PC-9 (cell line): ENCODE measurements at regions of chr6 and their contacts with region 1.

Region 1: DNA sequence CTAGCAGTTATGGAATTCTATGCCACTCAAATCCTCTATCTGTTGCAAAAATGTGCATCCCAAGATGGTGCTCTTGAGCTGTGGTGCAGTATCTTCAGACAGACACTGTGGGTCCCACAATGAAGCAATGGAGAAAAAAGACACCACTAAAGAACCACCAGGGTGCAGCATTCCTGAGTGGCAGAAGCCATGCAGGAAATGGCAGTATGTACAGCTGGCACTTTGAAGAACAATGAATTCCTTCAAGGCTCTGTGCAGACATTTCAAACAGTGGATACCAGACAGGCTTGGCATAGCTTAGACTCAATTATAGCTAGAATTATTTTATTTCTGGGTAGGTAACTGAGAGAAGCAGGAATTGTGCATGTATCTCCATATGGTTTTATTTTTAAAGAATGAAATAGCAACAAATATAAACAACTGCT is 24.0 kb upstream of the HDAC2 start:
- DNase-seq: peak; percentile 65 to 66
- H3K4me3 ChIP-seq: no peak overlapping the region
- H3K27ac ChIP-seq: no peak overlapping the region
- H3K4me1 ChIP-seq: 0 out of 2 replicates have a peak, but pooled peaks cover 16% of the 10 kb centered on the region
- H3K27me3 ChIP-seq: no peaks in the 10 kb centered on the region
- CTCF ChIP-seq: peak; percentile 75

Region 2: DNA sequence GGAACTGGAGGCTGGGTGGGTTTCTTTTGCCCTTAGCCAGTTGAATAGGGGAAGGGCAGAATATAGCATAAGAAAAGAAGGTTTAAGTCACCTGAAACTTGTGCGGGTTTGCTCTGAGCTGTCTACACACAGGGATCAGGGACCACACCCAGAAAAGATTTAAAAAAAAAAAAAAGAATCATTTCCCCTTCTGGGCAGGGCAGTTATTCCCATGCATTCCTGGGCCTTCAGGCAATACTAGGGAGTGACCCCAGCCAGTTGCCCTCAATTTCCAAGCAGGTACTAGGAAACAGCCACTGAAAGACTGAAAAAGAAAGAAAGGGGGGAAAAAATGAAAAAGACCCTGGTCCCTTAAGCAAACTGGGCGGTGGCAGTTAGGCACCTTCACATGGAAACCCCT is 15.6 kb after region 1 on chr6:
- CTCF ChIA-PET with region 1: no interaction called
- POLR2A ChIA-PET with region 1: no interaction called
- intact Hi-C with region 1: loop called (anchors 2 kb)
- DNase-seq: peak in 1 of 2 experiments; percentile 23
- H3K4me3 ChIP-seq: no peak overlapping the region
- H3K27ac ChIP-seq: no peak overlapping the region
- H3K4me1 ChIP-seq: no peaks in the 10 kb centered on the region
- H3K27me3 ChIP-seq: no peaks in the 10 kb centered on the region
- CTCF ChIP-seq: no peak

Region 3: DNA sequence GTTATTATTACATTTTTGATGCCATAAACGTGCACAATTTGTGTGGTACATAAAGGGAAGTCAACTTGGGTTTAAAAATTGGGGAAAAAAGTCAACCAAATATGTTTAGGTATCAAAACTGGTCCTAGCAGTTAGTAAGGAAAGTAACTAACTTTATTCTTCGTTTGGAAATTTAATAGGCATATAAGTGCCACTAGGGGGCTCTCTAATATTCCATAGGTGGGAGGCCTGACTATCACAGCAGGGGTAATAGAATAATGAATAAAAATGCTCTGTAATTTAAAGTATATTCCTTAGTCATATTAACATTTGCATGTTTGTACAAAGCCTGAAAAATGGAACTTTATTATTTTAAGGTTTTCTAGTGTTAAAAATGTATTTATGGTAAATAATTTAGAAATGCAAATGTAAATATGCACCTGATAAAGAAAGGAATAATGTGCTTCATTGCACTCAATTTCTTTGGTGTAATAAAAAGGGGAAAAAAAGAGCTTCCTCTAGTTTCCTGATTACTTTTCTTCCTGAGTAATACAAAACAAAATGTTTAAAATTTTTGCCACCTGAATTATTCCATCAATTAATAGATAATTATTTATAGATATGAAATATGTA is 101.7 kb after region 1 on chr6:
- CTCF ChIA-PET with region 1: interaction called, 3 read pairs
- POLR2A ChIA-PET with region 1: no interaction called
- intact Hi-C with region 1: loop called (anchors 1 kb)
- DNase-seq: no peak
- H3K4me3 ChIP-seq: no peak overlapping the region
- H3K27ac ChIP-seq: no peak overlapping the region
- H3K4me1 ChIP-seq: no peaks in the 10 kb centered on the region
- H3K27me3 ChIP-seq: no peaks in the 10 kb centered on the region
- CTCF ChIP-seq: peak; percentile 99

Region 4: DNA sequence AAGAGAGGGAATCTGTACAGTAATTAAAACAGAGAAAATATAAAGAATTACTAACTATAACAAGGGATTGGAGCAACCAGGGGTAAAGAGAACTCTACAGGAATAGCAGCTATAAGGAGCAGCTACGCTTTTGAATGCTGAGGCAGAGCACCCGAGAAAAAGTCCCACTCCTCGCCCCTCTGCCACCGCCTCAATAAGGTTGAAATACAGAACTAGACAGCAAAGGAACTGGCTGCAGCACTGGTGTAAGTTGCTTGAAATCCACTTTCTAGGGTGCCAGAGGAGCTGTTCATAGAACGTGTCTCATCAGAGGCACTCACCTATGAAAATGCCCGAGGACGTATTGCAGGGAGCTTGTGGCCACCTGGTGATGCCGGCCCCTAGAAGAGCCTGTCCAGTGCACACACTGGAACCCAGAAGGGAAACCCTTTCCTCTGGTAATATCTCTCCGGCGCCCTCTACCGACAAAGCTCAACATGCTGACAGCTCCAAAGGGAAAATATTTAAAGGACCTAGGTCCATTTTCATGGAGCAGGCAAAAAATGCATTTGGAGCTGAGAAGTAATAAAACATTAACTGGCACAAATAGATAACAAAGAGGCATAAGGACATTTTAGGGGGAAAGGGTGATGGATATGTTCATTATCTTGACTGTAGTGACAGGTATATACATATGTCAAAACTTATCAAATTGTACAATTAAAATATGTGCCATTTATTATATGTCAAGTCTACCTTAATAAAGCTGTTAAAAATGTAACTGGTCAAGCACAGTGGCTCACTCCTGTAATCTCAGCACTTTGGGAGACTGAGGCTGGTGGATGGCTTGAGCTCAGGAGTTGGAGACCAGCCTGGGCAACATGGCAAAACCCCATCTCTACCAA is 113.4 kb after region 1 on chr6:
- CTCF ChIA-PET with region 1: interaction called, 21 read pairs
- POLR2A ChIA-PET with region 1: interaction called, 3 read pairs
- intact Hi-C with region 1: loop called (anchors 1 kb)
- DNase-seq: peak; percentile 60 to 66
- H3K4me3 ChIP-seq: no peak overlapping the region
- H3K27ac ChIP-seq: no peak overlapping the region
- H3K4me1 ChIP-seq: no peaks in the 10 kb centered on the region
- H3K27me3 ChIP-seq: no peaks in the 10 kb centered on the region
- CTCF ChIP-seq: peak; percentile 87

Region 5: GRCh38 chr6:114304304-114304887 is 309.5 kb after region 1 on chr6:
- CTCF ChIA-PET with region 1: interaction called, 9 read pairs
- POLR2A ChIA-PET with region 1: no interaction called
- intact Hi-C with region 1: loop called (anchors 2 kb)
- DNase-seq: peak in 1 of 2 experiments; percentile 43
- H3K4me3 ChIP-seq: no peak overlapping the region
- H3K27ac ChIP-seq: no peak overlapping the region
- H3K4me1 ChIP-seq: no peaks in the 10 kb centered on the region
- H3K27me3 ChIP-seq: no peaks in the 10 kb centered on the region
- CTCF ChIP-seq: peak; percentile 84

Region 6: DNA sequence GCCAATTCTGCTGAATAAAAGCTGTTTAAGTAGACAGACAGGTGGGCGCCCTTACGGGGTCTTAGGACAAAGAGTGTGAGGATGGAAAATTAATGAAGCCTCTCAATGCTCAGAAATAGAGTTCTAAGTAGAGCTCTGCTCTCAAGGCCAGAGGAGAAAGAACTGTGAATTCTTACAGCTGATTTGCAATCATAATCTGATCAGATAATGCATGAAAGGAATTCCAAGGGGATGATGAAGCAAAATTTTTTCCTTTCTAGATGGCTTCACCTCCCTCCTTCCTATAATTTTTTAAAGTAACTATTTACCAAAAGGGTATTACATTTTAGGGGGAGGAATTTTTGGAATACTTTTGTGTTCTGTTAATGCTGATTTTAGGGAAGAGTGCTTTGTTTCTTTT is 656.0 kb after region 1 on chr6:
- CTCF ChIA-PET with region 1: no interaction called
- POLR2A ChIA-PET with region 1: no interaction called
- intact Hi-C with region 1: loop called (anchors 2 kb)
- DNase-seq: peak in 1 of 2 experiments; percentile 49
- H3K4me3 ChIP-seq: no peak overlapping the region
- H3K27ac ChIP-seq: no peak overlapping the region
- H3K4me1 ChIP-seq: 0 out of 2 replicates have a peak, but pooled peaks cover 11% of the 10 kb centered on the region
- H3K27me3 ChIP-seq: no peaks in the 10 kb centered on the region
- CTCF ChIP-seq: no peak

Region 7: GRCh38 chr6:115896538-115897129 is 1901.7 kb after region 1 on chr6:
- CTCF ChIA-PET with region 1: no interaction called
- POLR2A ChIA-PET with region 1: no interaction called
- intact Hi-C with region 1: loop called (anchors 1 kb)
- DNase-seq: no peak
- H3K4me3 ChIP-seq: no peak overlapping the region
- H3K27ac ChIP-seq: no peak overlapping the region
- H3K4me1 ChIP-seq: peaks cover 9% of the 10 kb centered on the region; the same call in 1 of the 2 replicates
- H3K27me3 ChIP-seq: no peaks in the 10 kb centered on the region
- CTCF ChIP-seq: peak; percentile 96